ENCODE measurements at regions of chr7 and their contacts with region 1.

Region 1: GRCh38 chr7:111312964-111313363 is 222.0 kb downstream of the LRRN3 start:
- DNase-seq: peak; percentile 13
- ATAC-seq: peak; percentile 78
- H3K4me3 ChIP-seq: no peak overlapping the region
- H3K27ac ChIP-seq: no peak overlapping the region
- H3K4me1 ChIP-seq: no peaks in the 10 kb centered on the region
- H3K27me3 ChIP-seq: no peaks in the 10 kb centered on the region
- CTCF ChIP-seq: no peak
- EP300 ChIP-seq: no peak
- POLR2A ChIP-seq: no peak
- RAD21 ChIP-seq: no peak

Region 2: DNA sequence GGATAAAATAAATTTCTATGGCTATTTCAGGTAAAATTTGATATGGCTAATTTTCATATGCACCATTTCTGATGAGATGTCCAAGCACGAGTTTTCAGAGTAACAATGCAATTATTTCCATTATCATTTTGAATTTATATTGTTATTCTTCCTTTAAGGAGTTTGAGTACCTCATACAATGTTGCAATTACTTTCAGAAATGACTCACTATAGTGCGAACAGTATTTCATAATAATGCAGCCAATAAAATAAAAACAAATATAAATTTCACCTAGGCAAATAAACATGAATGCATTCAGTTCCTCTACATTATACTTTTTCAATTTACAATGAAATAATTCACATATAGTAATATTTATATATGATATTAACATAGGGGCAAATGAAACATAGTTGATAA is 300.8 kb before region 1 on chr7:
- CTCF ChIA-PET with region 1: no interaction called
- POLR2A ChIA-PET with region 1: no interaction called
- in situ Hi-C with region 1: no loop called
- intact Hi-C with region 1: no loop called
- DNase-seq: no peak
- ATAC-seq: no peak
- H3K4me3 ChIP-seq: no peak overlapping the region
- H3K27ac ChIP-seq: no peak overlapping the region
- H3K4me1 ChIP-seq: no peaks in the 10 kb centered on the region
- H3K27me3 ChIP-seq: no peaks in the 10 kb centered on the region
- CTCF ChIP-seq: no peak
- EP300 ChIP-seq: no peak
- POLR2A ChIP-seq: no peak
- RAD21 ChIP-seq: no peak

Region 3: DNA sequence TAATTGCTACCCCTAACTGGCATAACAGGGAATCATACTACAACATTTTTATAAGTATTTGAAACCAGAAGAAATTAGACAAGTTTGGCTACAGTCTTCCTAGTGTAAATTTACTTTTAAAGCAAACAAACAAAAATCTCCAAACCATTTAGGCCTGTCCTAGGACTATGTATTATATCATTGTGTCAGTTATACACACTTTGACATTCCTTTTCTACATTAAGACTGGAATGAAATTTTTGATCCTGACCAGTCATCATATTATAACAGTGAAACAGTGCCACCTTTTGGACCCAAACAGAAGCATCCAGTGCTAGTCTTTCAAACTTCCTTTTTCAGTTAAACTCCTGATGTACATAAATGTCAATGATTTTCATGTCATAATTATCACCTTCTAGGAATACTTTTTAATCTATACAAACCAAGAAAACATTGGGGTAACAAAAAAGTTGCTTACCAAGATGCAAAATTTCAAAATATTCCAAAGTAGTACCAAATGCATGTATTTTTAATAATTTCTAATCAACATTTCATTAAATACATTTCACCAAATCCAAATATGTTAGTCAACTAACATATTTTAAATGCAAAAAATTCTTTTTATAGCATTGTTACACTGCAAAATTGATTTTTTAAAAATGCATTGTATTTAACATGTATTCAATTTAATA is 173.6 kb after region 1 on chr7:
- CTCF ChIA-PET with region 1: no interaction called
- POLR2A ChIA-PET with region 1: no interaction called
- in situ Hi-C with region 1: no loop called
- intact Hi-C with region 1: loop called (anchors 1 kb)
- DNase-seq: peak; percentile 41
- ATAC-seq: peak; percentile 46
- H3K4me3 ChIP-seq: no peak overlapping the region
- H3K27ac ChIP-seq: no peak overlapping the region
- H3K4me1 ChIP-seq: no peaks in the 10 kb centered on the region
- H3K27me3 ChIP-seq: no peaks in the 10 kb centered on the region
- CTCF ChIP-seq: peak; percentile 73
- EP300 ChIP-seq: no peak
- POLR2A ChIP-seq: no peak
- RAD21 ChIP-seq: peak; percentile 39; the same call in 1 of the 2 replicates